ENCODE measurements at regions of chr13 and their contacts with region 1.

Region 1: DNA sequence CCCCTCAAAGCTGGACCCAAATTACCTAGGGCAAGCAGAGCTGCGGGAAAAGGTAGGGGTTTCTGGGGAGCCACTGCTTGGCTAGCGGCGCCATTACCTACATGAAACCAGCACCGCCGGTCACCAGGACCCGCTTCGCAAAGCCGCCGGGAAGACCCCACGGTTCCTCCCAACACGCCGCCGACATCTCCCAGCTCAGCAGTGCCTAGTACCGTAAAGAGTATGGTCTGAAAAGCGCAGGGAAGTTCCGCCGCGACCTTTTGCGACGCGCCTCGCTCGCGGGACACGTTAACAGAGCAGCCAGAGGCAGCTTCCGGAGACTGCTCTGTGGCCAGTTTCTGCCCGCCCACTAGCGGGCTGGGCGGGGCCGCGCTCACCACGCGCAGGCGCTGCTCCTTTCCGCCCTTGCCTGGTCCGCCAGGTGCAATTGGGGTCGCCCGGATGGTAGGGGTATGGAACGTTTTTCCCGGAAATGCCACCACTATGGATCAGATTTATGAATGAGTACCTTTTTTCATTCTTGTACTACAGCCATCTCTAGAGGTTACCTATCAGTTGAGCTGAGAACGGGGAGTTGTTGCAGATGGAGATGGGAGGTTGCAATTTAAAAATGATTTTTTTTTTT is at the start of gene TGDS:
- DNase-seq: peak; percentile 97
- H3K4me3 Mint-ChIP-seq: peak within 1 kb of the TSS; percentile 93
- H3K27ac Mint-ChIP-seq: peak within 1 kb of the TSS; percentile 97
- H3K4me1 Mint-ChIP-seq: peaks cover 34% of the 10 kb centered on the region
- H3K27me3 Mint-ChIP-seq: no peaks in the 10 kb centered on the region
- total RNA-seq, gene TGDS: 27.5 and 31.0 TPM in 2 replicates

Region 2: GRCh38 chr13:94667190-94667589 is 71.1 kb after region 1 on chr13:
- intact Hi-C with region 1: loop called (anchors 1 kb)
- DNase-seq: peak; percentile 59
- H3K4me3 Mint-ChIP-seq: peak overlapping the region; percentile 39
- H3K27ac Mint-ChIP-seq: peak overlapping the region; percentile 92
- H3K4me1 Mint-ChIP-seq: peaks cover 32% of the 10 kb centered on the region
- H3K27me3 Mint-ChIP-seq: peaks cover 13% of the 10 kb centered on the region

Measured in activated CD4-positive, alpha-beta T cell treated with anti-CD3 and anti-CD28 coated beads, Interleukin-2, amount 10 ng/mL, durations not matched to agents 24 days and 14 days (primary cell).